Cardiac septum (tissue), 1 donor: ENCODE measurements at regions of chr10 and their contacts with region 1.

Region 1: GRCh38 chr10:91797874-91798648 is at the start of gene TNKS2:
- DNase-seq: peak; percentile 97
- total RNA-seq, gene TNKS2: 15.9 TPM

Region 2: GRCh38 chr10:91210435-91210834 is 587.6 kb before region 1 on chr10:
- intact Hi-C with region 1: no loop called
- DNase-seq: no peak

Region 3: GRCh38 chr10:91887272-91888076 is 89.4 kb after region 1 on chr10:
- intact Hi-C with region 1: loop called (anchors 10 kb)
- DNase-seq: no peak

Region 4: GRCh38 chr10:91923371-91924211 is 125.5 kb after region 1 on chr10 and contains the start of gene BTAF1:
- intact Hi-C with region 1: loop called (anchors 5 kb)
- DNase-seq: peak; percentile 97
- total RNA-seq, gene BTAF1: 15.9 TPM